ENCODE measurements at regions of chr17 and their contacts with region 1.

Region 1: GRCh38 chr17:76816590-76817135 is 51.5 kb upstream of the MGAT5B start:
- DNase-seq: peak; percentile 56 to 63 (median 57)
- H3K4me3 ChIP-seq: no peak overlapping the region
- H3K4me3 Mint-ChIP-seq: peak overlapping the region in 2 of 8 donors; percentile 20 to 29
- H3K27ac ChIP-seq: no peak overlapping the region
- H3K27ac Mint-ChIP-seq: peak overlapping the region in 4 of 7 donors; percentile 1 to 54 (median 36)
- H3K4me1 ChIP-seq: peaks cover 7% of the 10 kb centered on the region
- H3K4me1 Mint-ChIP-seq: peaks cover 7 to 9% (median 7%) of the 10 kb centered on the region in 4 donors
- H3K27me3 ChIP-seq: no peaks in the 10 kb centered on the region
- H3K27me3 Mint-ChIP-seq: peaks cover 0 to 2% of the 10 kb centered on the region in 2 donors

Region 2: GRCh38 chr17:76444518-76445311 is 371.9 kb before region 1 on chr17:
- CTCF ChIA-PET with region 1: no interaction called
- POLR2A ChIA-PET with region 1: no interaction called
- intact Hi-C with region 1: no loop called
- DNase-seq: no peak
- H3K4me3 ChIP-seq: no peak overlapping the region
- H3K4me3 Mint-ChIP-seq: no peak overlapping the region
- H3K27ac ChIP-seq: no peak overlapping the region
- H3K27ac Mint-ChIP-seq: no peak overlapping the region
- H3K4me1 ChIP-seq: peaks cover 16% of the 10 kb centered on the region
- H3K4me1 Mint-ChIP-seq: peaks cover 28 to 79% (median 54%) of the 10 kb centered on the region in 4 donors
- H3K27me3 ChIP-seq: no peaks in the 10 kb centered on the region
- H3K27me3 Mint-ChIP-seq: no peaks in the 10 kb centered on the region

Region 3: DNA sequence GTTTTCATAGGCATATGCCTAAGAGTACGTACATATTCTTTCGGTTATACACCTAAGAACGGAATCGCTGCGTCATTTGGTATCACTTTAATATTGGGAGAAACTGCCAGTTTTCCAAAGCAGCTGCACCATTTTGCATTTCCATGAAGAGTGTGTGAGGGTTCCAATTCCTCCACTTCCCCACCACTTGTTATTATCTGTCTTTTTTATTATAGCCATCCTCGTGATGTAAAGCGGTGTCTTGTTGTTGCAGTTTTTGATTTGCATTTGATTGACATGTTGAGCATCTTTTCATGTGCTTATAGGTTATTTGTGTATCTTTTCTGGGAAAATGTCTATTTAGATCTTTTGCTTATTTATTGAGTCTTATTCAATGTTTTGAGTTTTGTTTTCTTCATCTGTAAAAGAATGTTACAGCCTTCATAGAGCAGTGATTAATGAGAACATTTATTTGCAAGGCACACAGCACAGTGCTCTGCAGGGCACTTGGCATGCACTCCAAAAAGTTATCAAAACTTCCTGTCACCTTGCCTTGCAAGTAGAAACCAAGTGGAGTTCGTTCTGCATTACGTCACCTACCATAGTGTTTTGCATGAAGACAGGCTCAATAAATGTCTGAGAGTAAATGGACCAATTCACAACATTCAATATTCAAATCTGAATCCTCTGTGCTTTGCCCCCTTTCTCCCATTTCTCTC is 146.5 kb before region 1 on chr17:
- CTCF ChIA-PET with region 1: no interaction called
- POLR2A ChIA-PET with region 1: no interaction called
- intact Hi-C with region 1: no loop called
- DNase-seq: peak in 2 of 5 donors; percentile 33 to 43
- H3K4me3 ChIP-seq: no peak overlapping the region
- H3K4me3 Mint-ChIP-seq: peak overlapping the region in 6 of 8 donors; percentile 87 to 97 (median 92)
- H3K27ac ChIP-seq: no peak overlapping the region
- H3K27ac Mint-ChIP-seq: peak overlapping the region; percentile 91 to 98 (median 97)
- H3K4me1 ChIP-seq: peaks cover 34% of the 10 kb centered on the region
- H3K4me1 Mint-ChIP-seq: peaks cover 22 to 32% (median 29%) of the 10 kb centered on the region in 4 donors
- H3K27me3 ChIP-seq: no peaks in the 10 kb centered on the region
- H3K27me3 Mint-ChIP-seq: no peaks in the 10 kb centered on the region

Region 4: GRCh38 chr17:77068915-77069314 is 252.3 kb after region 1 on chr17:
- CTCF ChIA-PET with region 1: no interaction called
- POLR2A ChIA-PET with region 1: no interaction called
- intact Hi-C with region 1: loop called (anchors 1 kb)
- DNase-seq: no peak
- H3K4me3 ChIP-seq: no peak overlapping the region
- H3K4me3 Mint-ChIP-seq: no peak overlapping the region
- H3K27ac ChIP-seq: no peak overlapping the region
- H3K27ac Mint-ChIP-seq: no peak overlapping the region
- H3K4me1 ChIP-seq: no peaks in the 10 kb centered on the region
- H3K4me1 Mint-ChIP-seq: peaks cover 1 to 5% (median 3%) of the 10 kb centered on the region in 4 donors
- H3K27me3 ChIP-seq: no peaks in the 10 kb centered on the region
- H3K27me3 Mint-ChIP-seq: peaks cover 24 to 32% of the 10 kb centered on the region in 2 donors

Measured in CD4-positive, alpha-beta memory T cell (primary cell).